Heart right ventricle (tissue), 16 donors: ENCODE measurements at regions of chr12 and their contacts with region 1.

Region 1: DNA sequence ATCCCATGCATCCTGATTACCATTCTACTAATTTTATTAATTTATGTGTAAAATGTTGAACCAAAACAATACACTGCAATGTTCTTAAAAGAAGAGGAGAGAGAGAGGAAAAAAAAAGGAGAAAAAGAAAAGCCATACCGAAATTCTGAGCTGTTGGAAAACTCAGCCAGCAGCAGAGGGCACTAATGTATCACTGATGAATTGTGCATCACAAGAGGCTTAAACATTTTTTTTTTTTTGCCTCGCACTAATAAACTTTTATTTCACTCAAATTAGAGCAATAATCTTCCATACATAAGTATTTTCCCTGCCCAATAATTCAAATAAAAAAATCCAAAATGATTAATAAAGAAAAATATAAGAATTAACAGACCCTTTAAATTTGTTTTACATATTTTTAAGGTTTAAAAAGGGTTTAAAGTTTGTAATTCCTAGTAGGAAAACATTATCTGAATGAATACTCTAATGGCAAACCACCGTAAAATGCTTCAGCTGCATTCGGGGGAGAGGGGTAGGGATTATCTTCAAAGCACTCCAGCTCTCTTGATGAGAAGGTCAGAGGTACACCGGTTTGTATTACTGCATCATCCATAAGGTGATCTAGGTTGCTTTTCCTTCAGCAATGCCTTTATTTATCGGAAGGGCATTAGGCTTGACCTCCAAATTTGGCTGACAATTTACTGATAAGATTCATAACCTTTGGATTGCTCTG is 41.9 kb downstream of the ATP23 start:
- DNase-seq: peak in 1 of 2 donors; percentile 51
- ATAC-seq: no peak
- H3K4me3 ChIP-seq: no peak overlapping the region
- H3K27ac ChIP-seq: no peak overlapping the region
- H3K4me1 ChIP-seq: peaks cover 0 to 14% (median 7%) of the 10 kb centered on the region in 9 donors
- H3K27me3 ChIP-seq: peaks cover 0 to 2% (median 0%) of the 10 kb centered on the region in 7 donors
- CTCF ChIP-seq: peak; percentile 32 to 83 (median 71)

Region 2: GRCh38 chr12:57929092-57929830 is 54.0 kb before region 1 on chr12:
- intact Hi-C with region 1: no loop called
- DNase-seq: no peak
- ATAC-seq: peak in 3 of 8 donors; percentile 31 to 44 (median 38)
- H3K4me3 ChIP-seq: no peak overlapping the region
- H3K27ac ChIP-seq: no peak overlapping the region
- H3K4me1 ChIP-seq: peaks cover 0 to 5% (median 0%) of the 10 kb centered on the region in 9 donors
- H3K27me3 ChIP-seq: no peaks in the 10 kb centered on the region
- CTCF ChIP-seq: no peak

Region 3: DNA sequence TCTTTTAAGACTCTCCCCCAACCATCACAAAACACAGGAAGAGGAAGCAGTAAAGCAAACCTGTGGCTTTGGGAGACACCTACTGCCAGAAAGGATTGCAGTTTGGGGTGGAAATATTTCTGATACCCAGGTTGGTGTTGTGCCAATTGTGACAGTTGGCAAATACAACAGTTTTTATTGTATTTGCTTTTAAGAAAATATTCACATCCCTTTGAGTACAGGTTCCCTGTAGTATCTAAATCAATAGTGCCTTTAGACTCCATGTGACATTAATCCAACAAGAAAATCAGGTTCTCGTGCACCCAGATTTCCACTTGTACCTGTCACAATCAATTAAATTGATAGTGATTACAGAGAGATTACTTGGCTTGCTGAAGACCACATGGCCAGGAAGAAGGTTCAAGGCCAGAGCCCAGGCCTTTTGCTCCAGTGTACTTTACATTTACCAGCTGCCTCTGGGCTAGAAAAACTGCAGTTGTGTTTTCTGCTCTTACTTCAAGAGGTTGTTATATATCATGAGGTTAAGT is 319.2 kb after region 1 on chr12:
- intact Hi-C with region 1: loop called in 2 of 10 experiments (anchors 5 to 10 kb)
- DNase-seq: peak in 1 of 2 donors; percentile 4
- ATAC-seq: no peak
- H3K4me3 ChIP-seq: no peak overlapping the region
- H3K27ac ChIP-seq: no peak overlapping the region
- H3K4me1 ChIP-seq: peaks cover 0 to 11% (median 0%) of the 10 kb centered on the region in 9 donors
- H3K27me3 ChIP-seq: no peaks in the 10 kb centered on the region
- CTCF ChIP-seq: peak in 5 of 9 donors; percentile 15 to 53 (median 44)

Region 4: GRCh38 chr12:58443273-58443980 is 460.1 kb after region 1 on chr12:
- intact Hi-C with region 1: loop called in 3 of 10 experiments (anchors 10 kb)
- DNase-seq: peak in 1 of 2 donors; percentile 6
- ATAC-seq: peak in 3 of 8 donors; percentile 44 to 49 (median 47)
- H3K4me3 ChIP-seq: no peak overlapping the region
- H3K27ac ChIP-seq: no peak overlapping the region
- H3K4me1 ChIP-seq: peaks cover 0 to 9% (median 0%) of the 10 kb centered on the region in 9 donors
- H3K27me3 ChIP-seq: no peaks in the 10 kb centered on the region
- CTCF ChIP-seq: peak in 7 of 9 donors; percentile 39 to 59 (median 47)

Region 5: DNA sequence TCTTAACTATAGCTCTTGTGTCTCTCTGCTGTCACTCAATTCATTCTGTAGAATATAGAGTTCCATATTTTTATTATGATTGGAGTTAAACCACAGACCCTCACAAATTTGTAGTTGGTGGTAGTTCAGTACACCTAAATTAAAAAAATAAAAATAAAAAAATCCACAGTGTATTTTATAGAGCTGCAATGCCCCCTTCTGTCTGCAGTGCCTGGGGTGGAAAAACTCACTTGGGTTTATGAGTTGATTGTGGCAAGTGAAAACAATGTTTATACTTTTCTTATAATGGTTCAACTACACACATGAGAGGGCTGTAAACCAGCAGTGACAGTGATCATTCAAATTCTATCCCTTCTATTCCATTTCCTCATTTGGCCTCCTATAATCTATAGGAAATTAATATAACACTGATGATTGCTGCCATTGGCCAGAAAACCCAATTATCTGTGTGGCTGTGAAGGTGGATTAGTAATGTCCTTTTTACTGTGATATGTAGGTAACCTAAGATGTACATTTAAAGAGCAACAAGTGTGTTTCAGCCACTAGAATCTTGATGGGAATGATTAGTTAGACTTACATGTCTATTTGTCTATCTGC is 1103.9 kb after region 1 on chr12:
- intact Hi-C with region 1: loop called in 1 of 10 experiments (anchors 10 kb)
- DNase-seq: no peak
- ATAC-seq: no peak
- H3K4me3 ChIP-seq: no peak overlapping the region
- H3K27ac ChIP-seq: no peak overlapping the region
- H3K4me1 ChIP-seq: no peaks in the 10 kb centered on the region
- H3K27me3 ChIP-seq: no peaks in the 10 kb centered on the region
- CTCF ChIP-seq: peak in 8 of 9 donors; percentile 16 to 61 (median 46)

Region 6: GRCh38 chr12:59149997-59150642 is 1166.8 kb after region 1 on chr12:
- intact Hi-C with region 1: loop called in 7 of 10 experiments (anchors 5 to 10 kb)
- DNase-seq: peak in 1 of 2 donors; percentile 12
- ATAC-seq: peak; percentile 73 to 93 (median 86)
- H3K4me3 ChIP-seq: no peak overlapping the region
- H3K27ac ChIP-seq: no peak overlapping the region
- H3K4me1 ChIP-seq: peaks cover 0 to 3% (median 0%) of the 10 kb centered on the region in 9 donors
- H3K27me3 ChIP-seq: no peaks in the 10 kb centered on the region
- CTCF ChIP-seq: peak; percentile 65 to 99 (median 90)

Region 7: GRCh38 chr12:59158066-59158465 is 1174.8 kb after region 1 on chr12:
- intact Hi-C with region 1: loop called in 8 of 10 experiments (anchors 5 to 10 kb)
- DNase-seq: no peak
- ATAC-seq: no peak
- H3K4me3 ChIP-seq: no peak overlapping the region
- H3K27ac ChIP-seq: no peak overlapping the region
- H3K4me1 ChIP-seq: no peaks in the 10 kb centered on the region
- H3K27me3 ChIP-seq: no peaks in the 10 kb centered on the region
- CTCF ChIP-seq: no peak

Region 8: GRCh38 chr12:59164991-59165718 is 1181.9 kb after region 1 on chr12:
- intact Hi-C with region 1: loop called in 1 of 10 experiments (anchors 5 kb)
- DNase-seq: no peak
- ATAC-seq: no peak
- H3K4me3 ChIP-seq: no peak overlapping the region
- H3K27ac ChIP-seq: no peak overlapping the region
- H3K4me1 ChIP-seq: no peaks in the 10 kb centered on the region
- H3K27me3 ChIP-seq: peaks cover 0 to 3% (median 0%) of the 10 kb centered on the region in 7 donors
- CTCF ChIP-seq: peak in 8 of 9 donors; percentile 25 to 67 (median 58)